ENCODE measurements at regions of chr5 and their contacts with region 1.

Region 1: DNA sequence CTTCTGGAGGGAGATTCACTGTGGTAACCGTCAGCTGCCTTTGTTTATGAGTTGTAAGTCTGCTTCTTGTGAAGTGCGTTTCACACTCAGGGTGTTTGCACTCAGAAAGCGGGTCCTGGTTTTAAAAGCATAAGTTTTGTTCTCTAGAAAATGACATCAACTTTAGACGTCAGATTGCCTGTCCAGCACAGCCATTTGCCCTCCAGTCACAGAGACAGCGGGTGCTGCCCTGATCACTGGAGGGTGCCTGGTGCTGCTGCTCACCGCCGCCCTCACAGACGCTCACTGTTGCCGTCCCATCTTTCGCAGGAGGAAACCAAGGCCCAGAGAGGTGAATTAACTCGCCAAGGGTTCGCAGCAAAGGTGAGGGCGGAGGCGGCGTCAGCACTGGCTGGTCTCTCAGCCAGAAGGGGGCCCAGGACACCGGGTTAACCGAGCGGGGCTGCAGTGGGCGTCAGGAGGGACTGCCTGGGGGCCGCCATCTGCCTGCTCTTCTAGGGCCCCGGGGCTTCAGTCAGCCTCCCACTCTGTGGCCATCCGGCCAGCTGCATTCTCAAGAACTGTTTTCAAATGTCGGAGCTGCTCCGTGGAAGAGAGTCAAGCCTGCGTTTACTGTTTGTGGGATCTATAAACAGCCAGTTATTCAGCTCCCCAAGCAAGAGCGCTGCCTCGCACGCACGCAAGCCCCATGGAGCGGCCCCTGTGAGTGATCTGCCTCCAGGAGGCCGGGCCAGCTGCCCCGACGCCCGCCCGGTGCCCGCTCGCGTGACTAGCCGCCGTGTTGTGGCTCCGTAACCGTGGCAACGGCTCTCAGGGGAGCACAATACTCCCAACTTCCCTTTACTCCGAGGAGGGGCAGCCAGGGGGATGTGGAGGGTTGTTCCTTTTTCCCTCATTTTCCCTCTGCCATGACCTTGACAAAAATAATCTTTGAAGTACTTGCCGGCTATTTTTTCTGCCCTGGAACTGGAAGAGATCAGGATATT is 43.4 kb upstream of the EXOC3 start:
- DNase-seq: peak; percentile 98
- ATAC-seq: peak; percentile 81
- H3K4me3 ChIP-seq: no peak overlapping the region
- H3K27ac ChIP-seq: peak overlapping the region; percentile 99
- H3K4me1 ChIP-seq: peaks cover 45% of the 10 kb centered on the region
- H3K27me3 ChIP-seq: no peaks in the 10 kb centered on the region
- CTCF ChIP-seq: 0 out of 2 replicates have a peak, but pooled peaks have one; percentile 8
- POLR2A ChIP-seq: peak; percentile 90; the same call in 1 of the 2 replicates
- RAD21 ChIP-seq: no peak

Region 2: GRCh38 chr5:368183-369084 is 31.2 kb before region 1 on chr5:
- CTCF ChIA-PET with region 1: no interaction called
- POLR2A ChIA-PET with region 1: no interaction called
- dilution Hi-C with region 1: no loop called
- in situ Hi-C with region 1: no loop called
- intact Hi-C with region 1: loop called (anchors 1 kb)
- DNase-seq: peak; percentile 98
- ATAC-seq: peak; percentile 68
- H3K4me3 ChIP-seq: no peak overlapping the region
- H3K27ac ChIP-seq: peak overlapping the region; percentile 95
- H3K4me1 ChIP-seq: peaks cover 36% of the 10 kb centered on the region
- H3K27me3 ChIP-seq: no peaks in the 10 kb centered on the region
- CTCF ChIP-seq: no peak
- POLR2A ChIP-seq: no peak
- RAD21 ChIP-seq: no peak; the same call in none of the 2 replicates